GM12878 (cell line): ENCODE measurements at regions of chr6 and their contacts with region 1.

Region 1: DNA sequence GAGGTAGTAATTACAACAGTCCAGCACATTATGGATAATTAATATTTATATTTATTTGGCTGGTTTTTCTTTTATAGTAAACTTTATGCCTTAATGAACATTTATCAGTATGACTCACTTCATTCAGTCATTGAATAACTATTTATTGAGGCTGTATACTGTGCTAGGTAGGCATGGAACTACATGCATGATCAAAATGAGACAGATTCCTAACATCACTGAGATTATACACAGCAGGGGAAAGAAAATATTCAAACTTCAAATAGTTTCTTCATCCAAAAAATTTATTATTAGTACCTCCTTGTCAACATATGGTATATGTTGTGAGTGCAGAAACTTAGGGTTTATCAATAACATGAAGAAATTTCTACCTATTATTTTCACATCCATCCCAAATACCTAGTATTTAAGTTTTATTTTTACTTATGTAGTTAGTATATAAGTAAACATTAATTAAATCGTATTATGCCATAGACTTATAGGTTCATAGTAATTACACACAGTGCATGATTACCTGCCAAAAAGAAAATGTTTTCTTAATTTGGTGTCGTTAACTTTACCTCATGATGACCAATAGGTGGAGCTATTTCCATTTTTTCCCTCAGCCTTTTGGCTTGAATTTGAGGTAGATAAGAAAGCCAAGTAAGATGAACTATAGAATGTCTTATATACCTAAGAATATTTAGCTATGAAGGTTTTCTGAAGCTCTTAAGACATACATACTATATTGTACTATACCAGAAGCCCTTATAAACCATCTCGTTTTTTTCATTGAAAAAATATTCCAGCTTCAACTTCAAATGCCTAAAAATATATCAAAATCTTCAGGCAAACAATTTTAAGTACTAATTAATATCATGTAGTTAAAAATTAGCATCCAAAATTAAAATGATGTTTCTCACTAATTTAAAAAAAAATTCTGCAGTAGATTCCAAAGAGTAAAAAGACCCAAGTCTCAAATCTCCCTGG is 12.5 kb upstream of the TMEM30A start:
- DNase-seq: no peak
- ATAC-seq: peak; percentile 87
- H3K4me3 ChIP-seq: no peak overlapping the region
- H3K27ac ChIP-seq: no peak overlapping the region
- H3K4me1 ChIP-seq: no peaks in the 10 kb centered on the region
- H3K27me3 ChIP-seq: no peaks in the 10 kb centered on the region
- CTCF ChIP-seq: peak; percentile 53 to 75 (median 59); a peak in 5 of 6 replicates
- EP300 ChIP-seq: no peak
- POLR2A ChIP-seq: no peak
- RAD21 ChIP-seq: peak; percentile 87

Region 2: DNA sequence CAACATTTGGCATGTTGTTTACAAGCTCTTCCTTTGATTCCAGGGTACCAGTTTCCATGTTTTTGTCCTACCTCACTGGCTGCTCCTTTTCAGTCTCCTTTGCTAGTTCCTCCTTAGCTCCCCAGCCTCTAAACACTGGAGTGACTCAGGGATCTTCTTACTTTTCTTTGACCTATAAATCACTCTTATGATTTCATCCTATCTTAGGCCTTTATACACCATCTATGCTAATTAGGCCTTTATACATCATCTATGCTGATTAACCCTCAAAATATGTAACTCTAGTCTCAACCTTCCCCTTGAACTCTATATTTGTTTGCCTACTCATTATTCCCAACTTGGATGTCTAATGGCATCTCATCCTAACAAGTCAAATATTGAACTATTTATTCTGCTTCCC is 22.0 kb before region 1 on chr6:
- CTCF ChIA-PET with region 1: interaction called, 5 read pairs
- POLR2A ChIA-PET with region 1: no interaction called
- RAD21 ChIA-PET with region 1: interaction called, 54 read pairs
- SMC1A ChIA-PET with region 1: interaction called, 17 read pairs
- in situ Hi-C with region 1: no loop called
- intact Hi-C with region 1: no loop called
- DNase-seq: no peak
- ATAC-seq: no peak
- H3K4me3 ChIP-seq: no peak overlapping the region
- H3K27ac ChIP-seq: no peak overlapping the region
- H3K4me1 ChIP-seq: no peaks in the 10 kb centered on the region
- H3K27me3 ChIP-seq: no peaks in the 10 kb centered on the region
- CTCF ChIP-seq: no peak
- EP300 ChIP-seq: no peak
- POLR2A ChIP-seq: no peak
- RAD21 ChIP-seq: no peak

Region 3: GRCh38 chr6:75317503-75318206 is 20.6 kb after region 1 on chr6:
- CTCF ChIA-PET with region 1: interaction called, 11 read pairs
- POLR2A ChIA-PET with region 1: no interaction called
- RAD21 ChIA-PET with region 1: interaction called, 10 read pairs
- SMC1A ChIA-PET with region 1: interaction called, 5 read pairs
- in situ Hi-C with region 1: no loop called
- intact Hi-C with region 1: no loop called
- DNase-seq: no peak
- ATAC-seq: no peak
- H3K4me3 ChIP-seq: no peak overlapping the region
- H3K27ac ChIP-seq: no peak overlapping the region
- H3K4me1 ChIP-seq: no peaks in the 10 kb centered on the region
- H3K27me3 ChIP-seq: no peaks in the 10 kb centered on the region
- CTCF ChIP-seq: no peak
- EP300 ChIP-seq: no peak
- POLR2A ChIP-seq: no peak
- RAD21 ChIP-seq: no peak

Region 4: DNA sequence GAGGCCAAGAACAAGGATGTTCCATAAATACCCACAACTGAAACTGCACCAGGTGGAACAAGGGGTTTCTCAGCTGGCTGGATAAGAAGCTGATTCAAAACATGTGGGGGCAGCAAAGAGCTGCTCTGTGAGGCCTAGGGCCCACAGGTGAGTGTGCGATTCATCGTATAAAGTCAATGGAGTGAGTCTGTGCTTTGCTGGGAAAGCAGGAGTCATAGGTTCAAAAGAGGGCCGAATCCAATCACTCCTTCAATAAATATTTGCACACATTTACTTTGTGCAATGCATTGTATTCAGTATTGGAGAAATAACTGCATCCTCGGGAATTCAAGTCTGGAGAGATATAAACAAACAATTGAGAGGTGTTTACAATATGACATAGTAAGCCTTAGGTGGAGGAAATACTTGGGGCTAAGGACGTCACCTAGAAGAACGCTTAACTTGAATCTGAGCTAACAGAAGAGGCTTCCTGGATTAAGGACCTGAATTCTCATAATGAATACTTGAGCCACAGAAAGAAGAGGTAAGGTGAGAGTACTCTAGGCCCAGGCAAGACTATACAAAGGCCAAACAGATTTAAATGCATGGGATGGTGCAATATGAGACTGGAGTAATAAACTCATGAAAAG is 71.2 kb after region 1 on chr6:
- CTCF ChIA-PET with region 1: interaction called, 17 read pairs
- POLR2A ChIA-PET with region 1: no interaction called
- RAD21 ChIA-PET with region 1: interaction called, 12 read pairs
- SMC1A ChIA-PET with region 1: interaction called, 5 read pairs
- in situ Hi-C with region 1: no loop called
- intact Hi-C with region 1: no loop called
- DNase-seq: no peak
- ATAC-seq: peak; percentile 88
- H3K4me3 ChIP-seq: no peak overlapping the region
- H3K27ac ChIP-seq: no peak overlapping the region
- H3K4me1 ChIP-seq: no peaks in the 10 kb centered on the region
- H3K27me3 ChIP-seq: no peaks in the 10 kb centered on the region
- CTCF ChIP-seq: peak; percentile 46 to 56 (median 50); a peak in 5 of 6 replicates
- EP300 ChIP-seq: no peak
- POLR2A ChIP-seq: no peak
- RAD21 ChIP-seq: peak; percentile 69

Region 5: DNA sequence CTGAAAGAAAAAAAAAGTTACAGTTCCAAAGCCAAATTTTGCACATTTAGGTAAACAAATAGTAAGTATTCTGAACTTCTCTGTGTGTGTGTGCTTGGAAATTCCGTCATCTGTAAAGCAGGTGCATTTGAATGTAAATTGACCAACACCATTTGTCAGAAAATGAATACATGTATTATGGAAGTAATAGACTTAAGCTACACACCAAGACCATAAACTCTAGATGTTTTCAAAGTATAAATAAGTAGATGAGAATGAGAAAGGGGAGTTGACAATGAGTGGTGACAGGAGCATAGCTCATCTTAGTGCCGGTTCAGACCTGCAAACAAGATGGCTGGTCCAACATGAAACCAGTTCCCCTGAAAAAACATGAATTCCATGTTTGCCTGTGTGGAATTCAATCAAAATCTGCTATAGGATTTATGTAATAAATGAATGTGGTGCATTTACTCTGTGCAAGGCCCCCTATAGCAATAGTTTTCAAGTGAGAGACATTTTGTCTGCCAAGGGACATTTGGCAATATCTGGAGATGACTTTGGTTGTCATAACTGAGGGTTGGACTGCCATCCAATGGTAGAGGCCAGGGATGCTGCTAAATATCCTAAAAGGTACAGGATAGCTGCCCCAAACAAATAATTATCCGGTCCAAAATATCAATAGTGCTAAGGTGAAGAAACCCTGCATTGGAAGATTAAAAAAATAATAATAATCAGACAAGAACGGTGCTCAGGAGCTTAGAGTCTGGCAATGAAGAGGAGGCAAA is 207.6 kb after region 1 on chr6:
- CTCF ChIA-PET with region 1: interaction called, 68 read pairs
- POLR2A ChIA-PET with region 1: no interaction called
- RAD21 ChIA-PET with region 1: interaction called, 14 read pairs
- SMC1A ChIA-PET with region 1: interaction called, 17 read pairs
- in situ Hi-C with region 1: no loop called
- intact Hi-C with region 1: no loop called
- DNase-seq: no peak
- ATAC-seq: peak; percentile 55
- H3K4me3 ChIP-seq: no peak overlapping the region
- H3K27ac ChIP-seq: no peak overlapping the region
- H3K4me1 ChIP-seq: no peaks in the 10 kb centered on the region
- H3K27me3 ChIP-seq: no peaks in the 10 kb centered on the region
- CTCF ChIP-seq: peak in 1 of 3 experiments; percentile 33; a peak in 2 of 6 replicates
- EP300 ChIP-seq: no peak
- POLR2A ChIP-seq: no peak
- RAD21 ChIP-seq: peak; percentile 42; the same call in 1 of the 2 replicates

Region 6: GRCh38 chr6:75516757-75517156 is 219.7 kb after region 1 on chr6:
- CTCF ChIA-PET with region 1: interaction called, 25 read pairs
- POLR2A ChIA-PET with region 1: no interaction called
- RAD21 ChIA-PET with region 1: interaction called, 3 read pairs
- SMC1A ChIA-PET with region 1: interaction called, 40 read pairs
- in situ Hi-C with region 1: loop called (anchors 5 kb)
- intact Hi-C with region 1: no loop called
- DNase-seq: no peak
- ATAC-seq: no peak
- H3K4me3 ChIP-seq: no peak overlapping the region
- H3K27ac ChIP-seq: no peak overlapping the region
- H3K4me1 ChIP-seq: no peaks in the 10 kb centered on the region
- H3K27me3 ChIP-seq: no peaks in the 10 kb centered on the region
- CTCF ChIP-seq: no peak
- EP300 ChIP-seq: no peak
- POLR2A ChIP-seq: no peak
- RAD21 ChIP-seq: no peak

Region 7: GRCh38 chr6:75526502-75527127 is 229.5 kb after region 1 on chr6:
- CTCF ChIA-PET with region 1: interaction called, 62 read pairs
- POLR2A ChIA-PET with region 1: no interaction called
- RAD21 ChIA-PET with region 1: interaction called, 12 read pairs
- SMC1A ChIA-PET with region 1: interaction called, 40 read pairs
- in situ Hi-C with region 1: no loop called
- intact Hi-C with region 1: loop called (anchors 1 kb)
- DNase-seq: peak; percentile 40
- ATAC-seq: peak; percentile 97
- H3K4me3 ChIP-seq: no peak overlapping the region
- H3K27ac ChIP-seq: no peak overlapping the region
- H3K4me1 ChIP-seq: no peaks in the 10 kb centered on the region
- H3K27me3 ChIP-seq: no peaks in the 10 kb centered on the region
- CTCF ChIP-seq: peak; percentile 61 to 78 (median 65)
- EP300 ChIP-seq: no peak
- POLR2A ChIP-seq: no peak
- RAD21 ChIP-seq: peak; percentile 95